Naive thymus-derived CD4-positive, alpha-beta T cell (primary cell): ENCODE measurements at regions of chr4 and their contacts with region 1.

Region 1: GRCh38 chr4:108193886-108194672 is 25.3 kb upstream of the LEF1 start:
- DNase-seq: no peak
- ATAC-seq: no peak
- H3K4me3 ChIP-seq: no peak overlapping the region
- H3K4me3 Mint-ChIP-seq: no peak overlapping the region
- H3K27ac ChIP-seq: no peak overlapping the region
- H3K27ac Mint-ChIP-seq: peak overlapping the region in 2 of 9 donors; percentile 19 to 34
- H3K4me1 ChIP-seq: peaks cover 0 to 8% of the 10 kb centered on the region in 2 donors
- H3K4me1 Mint-ChIP-seq: peaks cover 6 to 39% (median 32%) of the 10 kb centered on the region in 7 donors
- H3K27me3 ChIP-seq: no peaks in the 10 kb centered on the region
- H3K27me3 Mint-ChIP-seq: peaks cover 0 to 4% (median 0%) of the 10 kb centered on the region in 5 donors

Region 2: DNA sequence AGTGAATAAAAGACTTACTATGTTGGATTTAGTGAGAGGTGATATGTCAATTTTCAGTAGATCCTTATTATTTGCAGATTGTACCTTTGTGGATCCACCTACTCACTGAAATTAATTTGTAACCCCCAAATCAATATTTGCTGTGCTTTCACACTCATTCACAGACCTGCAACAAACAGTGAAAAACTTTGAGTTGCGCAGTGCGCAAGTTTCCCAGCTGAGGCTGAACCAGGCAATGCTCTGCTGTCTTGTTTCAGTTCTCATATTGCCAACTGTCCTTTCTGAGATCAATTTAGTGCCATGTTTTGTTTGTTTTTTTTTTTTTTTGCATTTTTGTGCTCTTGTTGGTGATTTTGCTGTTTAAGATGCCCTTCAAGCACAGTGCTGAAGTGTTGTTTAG is 15.4 kb after region 1 on chr4:
- CTCF ChIA-PET with region 1: interaction called, 4 read pairs
- POLR2A ChIA-PET with region 1: no interaction called
- intact Hi-C with region 1: loop called in 1 of 2 experiments (anchors 2 kb)
- DNase-seq: no peak
- ATAC-seq: no peak
- H3K4me3 ChIP-seq: no peak overlapping the region
- H3K4me3 Mint-ChIP-seq: no peak overlapping the region
- H3K27ac ChIP-seq: no peak overlapping the region
- H3K27ac Mint-ChIP-seq: no peak overlapping the region
- H3K4me1 ChIP-seq: peaks cover 0 to 4% of the 10 kb centered on the region in 2 donors
- H3K4me1 Mint-ChIP-seq: peaks cover 8 to 58% (median 45%) of the 10 kb centered on the region in 7 donors
- H3K27me3 ChIP-seq: no peaks in the 10 kb centered on the region
- H3K27me3 Mint-ChIP-seq: no peaks in the 10 kb centered on the region